Activated B cell treated with CpG ODN at 0.5 μM for 24 hours (primary cell): ENCODE measurements at regions of chr19 and their contacts with region 1.

Region 1: GRCh38 chr19:6372594-6373095 is at the start of gene ALKBH7:
- DNase-seq: peak; percentile 84
- ATAC-seq: peak; percentile 74
- H3K4me3 Mint-ChIP-seq: peak within 1 kb of the TSS; percentile 92
- H3K27ac Mint-ChIP-seq: peak within 1 kb of the TSS; percentile 93
- H3K4me1 Mint-ChIP-seq: peaks cover 15% of the 10 kb centered on the region
- H3K27me3 Mint-ChIP-seq: no peaks in the 10 kb centered on the region
- CTCF ChIP-seq: no peak
- total RNA-seq, gene ALKBH7: 48.4 and 52.9 TPM in 2 replicates

Region 2: DNA sequence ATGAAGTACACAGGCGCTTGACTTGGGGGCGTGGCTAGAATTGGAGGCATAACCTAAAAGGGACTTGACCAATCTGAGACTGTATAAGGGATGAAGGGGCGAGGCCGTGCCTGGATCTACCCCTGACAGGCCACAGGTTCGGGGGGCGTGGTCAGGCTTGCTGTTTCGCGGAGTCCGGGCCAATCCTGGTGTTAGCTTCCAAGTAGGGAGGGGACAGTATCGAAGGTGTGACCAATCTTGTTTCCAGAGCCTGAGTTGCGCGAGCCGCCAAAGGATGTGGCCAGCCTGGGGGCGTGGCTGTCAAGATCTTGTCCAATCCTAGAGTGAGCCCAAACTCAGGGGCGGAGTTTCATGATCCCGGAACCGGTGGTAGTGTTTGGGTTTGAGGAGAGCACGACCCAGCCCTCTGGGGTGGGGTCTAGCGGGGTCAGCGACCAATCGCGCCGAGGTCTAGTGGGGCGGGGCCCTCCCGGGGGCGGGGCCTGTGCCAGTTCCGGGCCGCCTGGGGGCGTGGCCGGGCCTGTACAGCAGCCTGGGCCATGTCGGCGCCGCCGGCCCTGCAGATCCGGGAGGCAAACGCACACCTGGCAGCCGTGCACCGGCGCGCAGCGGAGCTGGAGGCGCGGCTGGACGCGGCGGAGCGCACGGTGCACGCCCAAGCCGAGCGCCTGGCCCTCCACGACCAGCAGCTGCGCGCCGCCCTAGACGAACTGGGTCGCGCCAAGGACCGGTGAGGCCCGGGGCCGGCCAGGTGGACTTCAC is 468.1 kb before region 1 on chr19 and contains the start of gene VMAC:
- CTCF ChIA-PET with region 1: no interaction called
- POLR2A ChIA-PET with region 1: no interaction called
- intact Hi-C with region 1: loop called (anchors 2 kb)
- DNase-seq: peak; percentile 100
- ATAC-seq: peak; percentile 78
- H3K4me3 Mint-ChIP-seq: peak within 1 kb of the TSS; percentile 95
- H3K27ac Mint-ChIP-seq: peak within 1 kb of the TSS; percentile 98
- H3K4me1 Mint-ChIP-seq: peaks cover 38% of the 10 kb centered on the region
- H3K27me3 Mint-ChIP-seq: no peaks in the 10 kb centered on the region
- CTCF ChIP-seq: no peak
- total RNA-seq, gene VMAC: 11.2 and 13.3 TPM in 2 replicates

Region 3: DNA sequence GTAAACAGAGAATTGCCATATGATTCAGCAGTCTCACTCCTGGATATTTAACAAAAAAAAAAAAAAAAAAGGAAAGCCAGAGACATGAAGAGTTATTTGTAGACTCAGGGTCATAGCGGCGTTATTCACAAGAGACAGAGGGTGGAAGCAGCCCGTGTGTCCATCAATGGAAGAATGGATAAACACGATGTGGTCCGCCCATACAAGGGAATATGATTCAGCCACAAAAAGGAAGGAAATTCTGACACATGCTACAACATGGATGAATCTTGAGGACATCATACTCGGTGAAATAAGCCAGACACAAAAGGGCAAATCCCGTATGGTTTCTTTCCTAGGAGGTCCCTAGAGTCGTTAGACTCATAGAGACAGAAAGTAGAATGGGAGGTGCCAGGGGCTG is 222.4 kb before region 1 on chr19:
- CTCF ChIA-PET with region 1: no interaction called
- POLR2A ChIA-PET with region 1: no interaction called
- intact Hi-C with region 1: no loop called
- DNase-seq: no peak
- ATAC-seq: no peak
- H3K4me3 Mint-ChIP-seq: no peak overlapping the region
- H3K27ac Mint-ChIP-seq: no peak overlapping the region
- H3K4me1 Mint-ChIP-seq: no peaks in the 10 kb centered on the region
- H3K27me3 Mint-ChIP-seq: peaks cover 4% of the 10 kb centered on the region
- CTCF ChIP-seq: no peak

Region 4: GRCh38 chr19:6362027-6362350 is 10.7 kb before region 1 on chr19:
- CTCF ChIA-PET with region 1: interaction called, 5 read pairs
- POLR2A ChIA-PET with region 1: interaction called, 47 read pairs
- intact Hi-C with region 1: loop called (anchors 1 kb)
- DNase-seq: no peak
- ATAC-seq: no peak
- H3K4me3 Mint-ChIP-seq: peak overlapping the region; percentile 87
- H3K27ac Mint-ChIP-seq: peak overlapping the region; percentile 78
- H3K4me1 Mint-ChIP-seq: peaks cover 11% of the 10 kb centered on the region
- H3K27me3 Mint-ChIP-seq: no peaks in the 10 kb centered on the region
- CTCF ChIP-seq: no peak

Region 5: GRCh38 chr19:6424939-6425731 is 52.5 kb after region 1 on chr19:
- CTCF ChIA-PET with region 1: no interaction called
- POLR2A ChIA-PET with region 1: interaction called, 22 read pairs
- intact Hi-C with region 1: loop called (anchors 1 kb)
- DNase-seq: peak; percentile 92
- ATAC-seq: peak; percentile 83
- H3K4me3 Mint-ChIP-seq: peak overlapping the region; percentile 78
- H3K27ac Mint-ChIP-seq: peak overlapping the region; percentile 85
- H3K4me1 Mint-ChIP-seq: peaks cover 30% of the 10 kb centered on the region
- H3K27me3 Mint-ChIP-seq: no peaks in the 10 kb centered on the region
- CTCF ChIP-seq: no peak

Region 6: DNA sequence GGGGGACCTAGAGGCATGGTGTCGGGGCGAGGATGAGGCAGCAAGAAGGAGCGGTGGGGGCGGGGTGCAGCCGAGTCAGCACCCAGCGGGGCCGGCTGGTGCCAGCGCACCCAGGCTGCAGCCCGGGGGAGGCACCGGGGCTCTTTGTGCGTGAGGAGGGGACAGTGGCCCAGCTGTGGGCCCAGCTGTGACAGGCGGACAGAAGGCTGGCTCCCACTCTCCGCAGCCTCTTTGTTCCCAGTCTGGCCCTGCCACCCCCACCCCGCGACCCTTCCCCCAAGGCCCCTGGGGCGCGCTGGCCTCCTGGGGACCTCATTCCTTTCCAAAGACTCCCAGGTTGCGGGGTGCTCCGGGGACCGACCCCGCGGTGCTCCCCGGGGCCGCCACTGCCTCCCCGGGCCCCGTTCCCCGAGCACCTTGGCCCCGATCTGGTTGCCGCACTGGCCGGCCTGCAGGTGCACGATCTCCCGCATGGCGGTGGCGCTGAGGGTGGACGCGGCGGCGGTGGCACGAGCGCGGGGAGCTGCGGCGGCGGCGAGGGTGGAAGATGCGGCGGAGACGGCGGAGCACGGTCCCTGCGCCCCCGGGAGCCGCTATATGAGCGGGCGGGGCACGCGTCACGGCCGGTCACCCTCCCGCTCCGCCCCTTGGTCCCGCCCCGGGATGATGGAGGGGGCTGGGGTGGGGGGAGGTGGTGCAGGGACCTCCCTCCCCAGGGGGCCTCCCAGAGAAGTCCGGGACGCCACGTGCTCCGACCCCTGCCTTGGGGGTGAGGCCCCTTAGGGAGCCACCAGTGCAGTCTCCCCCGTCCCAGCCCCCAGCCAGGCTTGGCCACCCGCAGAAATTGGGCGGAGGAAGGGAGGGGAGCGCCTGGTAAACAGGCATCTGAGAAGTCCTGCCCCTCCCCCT is 129.3 kb after region 1 on chr19 and contains the start of gene TUBB4A:
- CTCF ChIA-PET with region 1: no interaction called
- POLR2A ChIA-PET with region 1: no interaction called
- intact Hi-C with region 1: loop called (anchors 1 kb)
- DNase-seq: peak; percentile 65
- ATAC-seq: peak; percentile 78
- H3K4me3 Mint-ChIP-seq: peak within 1 kb of the TSS; percentile 87
- H3K27ac Mint-ChIP-seq: no peak within 1 kb of the TSS
- H3K4me1 Mint-ChIP-seq: peaks cover 23% of the 10 kb centered on the region
- H3K27me3 Mint-ChIP-seq: peaks cover 4% of the 10 kb centered on the region
- CTCF ChIP-seq: no peak
- total RNA-seq, gene TUBB4A: 13.2 and 16.8 TPM in 2 replicates

Region 7: GRCh38 chr19:6767357-6768235 is 395.0 kb after region 1 on chr19 and contains the start of gene SH2D3A:
- CTCF ChIA-PET with region 1: no interaction called
- POLR2A ChIA-PET with region 1: no interaction called
- intact Hi-C with region 1: loop called (anchors 2 kb)
- DNase-seq: peak; percentile 87
- ATAC-seq: peak; percentile 73
- H3K4me3 Mint-ChIP-seq: peak within 1 kb of the TSS; percentile 88
- H3K27ac Mint-ChIP-seq: peak within 1 kb of the TSS; percentile 85
- H3K4me1 Mint-ChIP-seq: peaks cover 46% of the 10 kb centered on the region
- H3K27me3 Mint-ChIP-seq: no peaks in the 10 kb centered on the region
- CTCF ChIP-seq: no peak
- total RNA-seq, gene SH2D3A: 18.7 and 22.6 TPM in 2 replicates